ENCODE measurements at regions of chr1 and their contacts with region 1.

Region 1: DNA sequence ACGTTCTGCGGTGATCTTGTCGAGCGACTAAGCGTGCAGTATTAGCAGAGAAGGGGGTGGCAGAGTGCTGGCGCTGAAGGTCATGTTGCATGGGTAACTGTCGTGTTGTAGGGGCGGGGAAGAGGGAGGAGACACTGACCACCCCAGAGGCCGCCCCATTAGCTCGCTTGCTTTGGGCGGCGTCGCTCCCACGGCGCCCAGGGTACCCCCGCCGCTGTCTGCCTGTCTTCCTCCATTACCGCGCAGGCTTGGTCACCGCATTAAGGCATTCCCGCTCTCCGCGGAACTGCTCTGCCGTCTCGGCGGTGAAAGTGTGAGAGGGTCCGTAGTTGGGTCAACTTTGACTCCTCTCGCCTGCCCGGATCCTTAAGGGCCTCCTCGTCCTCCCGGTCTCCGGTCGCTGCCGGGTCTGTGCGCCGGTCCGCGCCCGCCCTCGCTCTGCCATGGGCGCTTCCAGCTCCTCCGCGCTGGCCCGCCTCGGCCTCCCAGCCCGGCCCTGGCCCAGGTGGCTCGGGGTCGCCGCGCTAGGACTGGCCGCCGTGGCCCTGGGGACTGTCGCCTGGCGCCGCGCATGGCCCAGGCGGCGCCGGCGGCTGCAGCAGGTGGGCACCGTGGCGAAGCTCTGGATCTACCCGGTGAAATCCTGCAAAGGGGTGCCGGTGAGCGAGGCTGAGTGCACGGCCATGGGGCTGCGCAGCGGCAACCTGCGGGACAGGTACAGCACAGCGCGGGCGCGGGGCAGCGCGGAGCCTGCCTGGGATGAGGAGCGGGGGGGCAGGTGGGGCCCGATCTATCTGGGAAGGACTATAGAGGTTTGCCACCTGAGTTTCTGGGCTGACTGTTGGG is at the start of gene MTARC2:
- DNase-seq: peak; percentile 83
- ATAC-seq: peak; percentile 93
- H3K4me3 ChIP-seq: peak within 1 kb of the TSS; percentile 65 to 87 (median 79)
- H3K27ac ChIP-seq: peak within 1 kb of the TSS; percentile 68
- H3K4me1 ChIP-seq: peaks cover 57% of the 10 kb centered on the region
- H3K27me3 ChIP-seq: peaks cover 0 to 16% of the 10 kb centered on the region in 2 experiments; a peak in 3 of 5 replicates
- CTCF ChIP-seq: peak; percentile 3; the same call in 1 of the 2 replicates
- EP300 ChIP-seq: peak in 1 of 2 experiments; percentile 27; a peak in 1 of 4 replicates
- POLR2A ChIP-seq: peak; percentile 80 to 89
- RAD21 ChIP-seq: no peak
- total RNA-seq, gene MTARC2: 4.7 and 10.1 TPM in 2 replicates

Region 2: DNA sequence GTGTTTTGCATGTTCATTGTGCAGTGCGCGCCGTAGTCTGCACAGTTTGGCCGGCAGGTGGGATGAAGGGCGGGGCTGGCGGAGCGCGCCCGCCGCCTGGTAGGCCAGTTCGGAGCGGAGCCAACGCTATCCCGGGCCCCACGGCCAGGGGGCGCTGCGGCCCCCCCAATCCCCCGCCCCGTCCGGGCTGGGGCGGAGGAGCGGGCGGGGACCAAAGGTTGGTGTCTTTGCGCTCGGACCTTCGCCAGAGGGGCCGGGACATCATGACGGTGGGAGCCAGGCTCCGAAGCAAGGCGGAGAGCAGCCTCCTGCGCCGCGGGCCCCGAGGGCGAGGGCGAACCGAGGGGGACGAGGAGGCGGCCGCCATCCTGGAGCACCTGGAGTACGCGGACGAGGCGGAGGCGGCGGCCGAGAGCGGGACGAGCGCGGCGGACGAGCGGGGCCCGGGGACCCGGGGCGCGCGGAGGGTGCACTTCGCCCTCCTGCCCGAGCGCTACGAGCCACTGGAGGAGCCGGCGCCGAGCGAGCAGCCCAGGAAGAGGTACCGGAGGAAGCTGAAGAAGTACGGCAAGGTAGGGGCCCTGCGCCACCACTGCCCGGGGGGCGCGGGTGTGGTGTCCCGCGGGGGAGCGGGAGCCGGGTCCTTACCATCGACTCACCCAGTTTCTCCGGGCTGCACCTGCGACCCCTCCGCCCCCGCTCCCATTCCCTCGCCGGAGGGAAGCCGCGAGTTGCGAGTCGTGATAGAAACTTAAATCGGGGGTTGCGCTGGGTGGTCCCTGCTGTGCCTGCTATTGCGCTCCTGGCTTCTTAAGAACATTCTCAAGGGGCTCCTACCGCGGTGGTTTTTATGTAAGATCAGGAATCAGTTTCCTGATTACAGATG is 57.9 kb before region 1 on chr1 and contains the start of gene C1orf115:
- CTCF ChIA-PET with region 1: no interaction called
- POLR2A ChIA-PET with region 1: interaction called, 9 read pairs
- in situ Hi-C with region 1: no loop called
- intact Hi-C with region 1: loop called (anchors 2 kb)
- DNase-seq: peak; percentile 68
- ATAC-seq: peak; percentile 85
- H3K4me3 ChIP-seq: peak within 1 kb of the TSS; percentile 81 to 86 (median 82)
- H3K27ac ChIP-seq: peak within 1 kb of the TSS; percentile 61
- H3K4me1 ChIP-seq: peaks cover 45% of the 10 kb centered on the region
- H3K27me3 ChIP-seq: no peaks in the 10 kb centered on the region; a peak in 2 of 5 replicates
- CTCF ChIP-seq: peak; percentile 94
- EP300 ChIP-seq: no peak; a peak in 1 of 4 replicates
- POLR2A ChIP-seq: peak; percentile 63 to 87
- RAD21 ChIP-seq: peak; percentile 96
- total RNA-seq, gene C1orf115: 85.9 and 86.7 TPM in 2 replicates

Region 3: DNA sequence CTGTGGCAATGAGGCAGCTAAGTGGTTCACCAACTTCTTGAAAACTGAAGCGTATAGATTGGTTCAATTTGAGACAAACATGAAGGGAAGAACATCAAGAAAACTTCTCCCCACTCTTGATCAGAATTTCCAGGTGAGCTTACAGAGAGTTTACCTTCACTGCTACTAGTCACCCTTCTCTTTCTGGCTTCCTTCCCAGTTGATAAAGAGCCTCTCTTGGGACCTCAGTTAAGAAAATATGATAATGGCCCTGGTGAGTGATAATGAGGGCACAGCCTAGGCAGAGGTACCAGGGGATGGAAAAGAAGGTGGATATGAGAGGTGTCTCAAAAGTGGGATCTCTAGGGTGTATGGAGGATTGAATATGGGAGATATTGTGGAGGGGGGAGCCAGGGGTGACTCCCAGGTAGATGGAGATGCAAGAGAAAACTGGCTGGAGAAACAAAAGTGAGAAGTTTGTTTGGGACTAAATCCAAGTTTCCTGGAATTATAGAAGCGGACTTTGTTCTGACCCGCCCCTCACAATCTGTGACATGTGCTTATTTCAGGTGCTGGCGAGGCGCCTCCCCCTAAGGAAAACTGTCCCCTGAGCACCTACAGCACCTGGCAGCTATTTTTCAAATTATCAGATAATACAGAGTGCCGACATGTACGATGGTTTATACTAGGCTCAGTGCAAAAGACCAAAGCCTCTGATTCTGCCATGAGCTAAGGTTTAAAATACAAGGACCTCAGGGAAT is 13.5 kb after region 1 on chr1:
- CTCF ChIA-PET with region 1: no interaction called
- POLR2A ChIA-PET with region 1: interaction called, 39 read pairs
- in situ Hi-C with region 1: no loop called
- intact Hi-C with region 1: loop called (anchors 1 kb)
- DNase-seq: peak; percentile 18
- ATAC-seq: peak; percentile 35; the same call in 2 of the 3 replicates
- H3K4me3 ChIP-seq: no peak overlapping the region
- H3K27ac ChIP-seq: no peak overlapping the region
- H3K4me1 ChIP-seq: peaks cover 38% of the 10 kb centered on the region
- H3K27me3 ChIP-seq: no peaks in the 10 kb centered on the region
- CTCF ChIP-seq: no peak
- EP300 ChIP-seq: no peak
- POLR2A ChIP-seq: no peak
- RAD21 ChIP-seq: no peak

Region 4: DNA sequence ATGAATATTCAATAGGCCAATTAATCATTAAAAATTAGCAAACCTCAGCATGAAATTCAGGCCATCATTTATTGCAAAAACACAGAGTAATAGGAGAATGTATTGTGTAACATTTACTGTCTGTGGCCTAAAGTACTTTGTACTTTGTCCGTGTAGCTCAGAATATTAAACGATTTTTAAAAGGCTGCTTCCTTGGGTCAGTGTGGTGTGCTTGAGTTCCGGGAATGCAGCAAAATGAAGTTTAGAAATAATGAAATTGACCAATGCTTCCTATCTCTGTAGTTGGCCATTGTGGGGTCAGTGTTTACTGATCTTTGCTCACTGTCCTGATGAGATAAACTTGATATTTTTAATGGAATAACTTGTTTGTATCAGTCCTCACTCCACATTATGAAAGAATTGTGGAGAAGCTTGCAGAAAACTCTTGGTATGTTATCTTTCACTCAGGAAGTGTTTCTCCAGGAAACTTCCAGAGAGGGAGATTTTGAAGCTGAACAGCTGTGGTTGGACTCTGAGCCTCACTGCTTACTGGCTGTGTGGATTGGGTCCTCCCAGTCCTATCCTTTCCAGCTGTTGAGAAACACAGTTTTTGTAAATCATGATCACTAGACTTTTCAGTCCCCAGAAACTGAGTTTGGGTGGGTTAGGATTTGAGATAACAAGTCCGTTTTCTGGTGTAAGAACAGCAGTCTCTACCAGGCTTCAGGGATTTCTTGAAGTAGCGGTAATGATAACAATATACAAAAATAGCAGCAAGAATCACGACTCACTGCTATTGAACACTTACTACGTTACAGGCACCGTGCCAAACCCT is 19.2 kb after region 1 on chr1:
- CTCF ChIA-PET with region 1: no interaction called
- POLR2A ChIA-PET with region 1: interaction called, 39 read pairs
- in situ Hi-C with region 1: no loop called
- intact Hi-C with region 1: loop called (anchors 1 kb)
- DNase-seq: peak; percentile 78
- ATAC-seq: peak; percentile 93
- H3K4me3 ChIP-seq: peak overlapping the region; percentile 34 to 55 (median 34); a peak in 5 of 6 replicates
- H3K27ac ChIP-seq: peak overlapping the region; percentile 87
- H3K4me1 ChIP-seq: peaks cover 49% of the 10 kb centered on the region
- H3K27me3 ChIP-seq: no peaks in the 10 kb centered on the region
- CTCF ChIP-seq: no peak
- EP300 ChIP-seq: peak in 1 of 2 experiments; percentile 70; a peak in 2 of 4 replicates
- POLR2A ChIP-seq: no peak
- RAD21 ChIP-seq: no peak